H1 (cell line): ENCODE measurements at regions of chr1 and their contacts with region 1.

Region 1: DNA sequence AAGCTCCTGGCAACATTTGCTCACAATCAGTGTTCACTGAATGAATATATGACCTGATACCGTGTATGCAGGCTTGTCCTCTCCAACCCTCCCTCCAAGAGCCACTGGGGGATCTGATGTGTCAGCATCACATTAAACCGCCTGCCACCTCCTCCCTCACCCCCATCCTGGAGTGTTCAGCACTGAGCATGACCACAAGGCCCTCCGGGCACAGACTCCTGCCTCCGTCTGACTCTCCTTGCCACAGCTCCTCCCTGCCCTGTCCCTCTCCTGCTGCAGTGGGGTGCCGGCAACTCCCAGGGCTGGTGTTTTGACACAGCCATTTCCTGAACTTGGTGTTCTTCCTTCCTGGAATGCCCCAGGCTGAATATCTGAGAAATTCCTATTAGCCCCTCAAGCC is 136.7 kb downstream of the FCRL5 start:
- DNase-seq: peak in 1 of 2 experiments; percentile 14
- H3K4me3 ChIP-seq: no peak overlapping the region
- H3K27ac ChIP-seq: no peak overlapping the region
- H3K4me1 ChIP-seq: no peaks in the 10 kb centered on the region
- H3K27me3 ChIP-seq: peaks cover 0 to 2% (median 0%) of the 10 kb centered on the region in 4 experiments; a peak in 1 of 7 replicates
- CTCF ChIP-seq: no peak
- EP300 ChIP-seq: no peak
- POLR2A ChIP-seq: no peak
- RAD21 ChIP-seq: no peak

Region 2: DNA sequence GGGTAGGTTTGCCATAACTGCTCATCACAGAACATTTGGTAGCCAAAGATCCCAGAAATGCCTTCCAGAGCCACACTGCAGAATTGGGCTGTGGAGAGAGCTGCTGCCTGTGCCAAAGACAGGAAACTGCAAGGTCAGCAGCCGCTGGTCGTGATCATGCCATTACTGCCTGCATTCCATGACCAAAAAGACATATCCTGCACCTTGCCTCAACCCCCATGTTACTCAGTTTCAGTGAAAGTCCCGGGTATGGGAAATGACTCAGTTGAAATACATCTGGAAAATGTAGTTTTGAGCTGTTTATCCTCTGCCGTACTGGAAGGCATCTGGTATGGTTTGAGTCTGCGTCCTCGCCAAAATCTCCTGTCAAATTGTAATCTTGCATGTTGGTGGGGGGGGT is 25.0 kb before region 1 on chr1:
- CTCF ChIA-PET with region 1: no interaction called
- POLR2A ChIA-PET with region 1: no interaction called
- DNase-seq: no peak
- H3K4me3 ChIP-seq: no peak overlapping the region
- H3K27ac ChIP-seq: no peak overlapping the region
- H3K4me1 ChIP-seq: no peaks in the 10 kb centered on the region; a peak in 1 of 7 replicates
- H3K27me3 ChIP-seq: no peaks in the 10 kb centered on the region
- CTCF ChIP-seq: no peak
- EP300 ChIP-seq: no peak
- POLR2A ChIP-seq: no peak
- RAD21 ChIP-seq: no peak

Region 3: DNA sequence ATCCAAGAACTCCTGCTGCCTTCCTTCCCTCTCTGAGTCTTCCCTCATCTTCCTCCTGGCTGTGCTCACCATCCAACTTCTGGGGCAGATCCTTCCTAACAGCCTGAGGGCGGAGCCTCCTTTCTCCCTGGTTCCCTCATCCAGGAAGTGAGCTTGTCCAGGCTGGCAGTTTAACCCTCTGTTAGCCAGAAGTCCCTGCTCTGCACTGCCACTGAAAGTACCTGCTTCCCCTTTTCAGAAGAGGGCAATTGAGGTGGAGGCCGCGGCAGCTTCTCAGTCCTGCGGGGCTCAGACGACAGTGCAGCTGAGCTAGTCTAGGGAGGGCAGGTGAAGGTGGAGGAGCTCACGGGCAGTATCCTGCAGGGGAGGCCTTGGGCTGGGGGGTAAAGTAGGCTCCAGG is 12.5 kb before region 1 on chr1:
- CTCF ChIA-PET with region 1: interaction called, 15 read pairs
- POLR2A ChIA-PET with region 1: interaction called, 5 read pairs
- DNase-seq: peak in 1 of 2 experiments; percentile 21
- H3K4me3 ChIP-seq: no peak overlapping the region
- H3K27ac ChIP-seq: 0 out of 2 replicates have a peak overlapping the region, but pooled peaks have one; percentile 6
- H3K4me1 ChIP-seq: peaks cover 0 to 8% (median 3%) of the 10 kb centered on the region in 4 experiments; a peak in 4 of 7 replicates
- H3K27me3 ChIP-seq: no peaks in the 10 kb centered on the region
- CTCF ChIP-seq: no peak
- EP300 ChIP-seq: no peak
- POLR2A ChIP-seq: no peak
- RAD21 ChIP-seq: no peak